ENCODE measurements at regions of chr18 and their contacts with region 1.

Region 1: DNA sequence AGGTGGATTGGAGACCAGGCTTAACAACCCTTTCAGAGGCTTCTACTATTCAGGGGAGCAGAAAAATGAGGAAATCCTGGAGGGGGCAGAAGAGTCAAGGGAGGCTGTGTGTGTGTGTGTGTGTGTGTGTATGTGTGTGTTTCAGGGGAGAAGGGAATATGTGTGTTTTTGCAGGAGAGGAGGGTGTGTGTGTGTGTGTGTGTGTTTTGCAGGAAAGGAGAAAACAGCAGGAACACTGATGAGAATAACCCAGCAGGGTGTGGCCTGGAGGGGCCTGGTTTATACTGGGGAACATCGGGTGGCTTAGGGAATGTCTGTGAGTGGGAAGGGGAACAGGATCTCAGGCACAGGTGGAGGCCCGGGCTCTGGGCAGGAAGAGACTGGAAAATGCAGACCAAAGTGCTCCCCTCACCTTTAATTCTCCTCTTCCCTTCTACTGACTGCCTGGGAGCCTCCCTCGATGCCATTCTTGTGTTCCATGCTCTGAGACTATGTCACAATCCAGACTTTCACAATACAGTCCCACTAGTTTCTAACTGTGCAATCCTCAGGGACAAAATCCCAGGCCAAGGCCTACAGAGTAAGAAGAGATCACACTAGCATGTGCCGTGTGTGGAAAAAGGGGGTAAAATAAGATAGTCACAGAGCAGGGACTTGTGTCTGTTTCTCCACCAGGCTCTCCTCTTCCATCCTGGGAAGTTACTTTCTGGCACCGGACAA is 10.0 kb downstream of the CYB5A start:
- DNase-seq: peak; percentile 76
- H3K4me3 ChIP-seq: no peak overlapping the region
- H3K27ac ChIP-seq: peak overlapping the region; percentile 65 to 88 (median 84)
- H3K4me1 ChIP-seq: peaks cover 0 to 85% (median 76%) of the 10 kb centered on the region in 4 donors
- H3K27me3 ChIP-seq: no peaks in the 10 kb centered on the region
- CTCF ChIP-seq: no peak
- EP300 ChIP-seq: no peak
- POLR2A ChIP-seq: no peak

Region 2: GRCh38 chr18:74234326-74235171 is 47.2 kb before region 1 on chr18:
- intact Hi-C with region 1: loop called (anchors 1 kb)
- DNase-seq: peak; percentile 87
- H3K4me3 ChIP-seq: peak overlapping the region in 1 of 4 donors; percentile 3
- H3K27ac ChIP-seq: peak overlapping the region; percentile 57 to 87 (median 79)
- H3K4me1 ChIP-seq: peaks cover 0 to 35% (median 25%) of the 10 kb centered on the region in 4 donors
- H3K27me3 ChIP-seq: no peaks in the 10 kb centered on the region
- CTCF ChIP-seq: no peak
- EP300 ChIP-seq: peak; percentile 57 to 91 (median 86)
- POLR2A ChIP-seq: no peak

Region 3: DNA sequence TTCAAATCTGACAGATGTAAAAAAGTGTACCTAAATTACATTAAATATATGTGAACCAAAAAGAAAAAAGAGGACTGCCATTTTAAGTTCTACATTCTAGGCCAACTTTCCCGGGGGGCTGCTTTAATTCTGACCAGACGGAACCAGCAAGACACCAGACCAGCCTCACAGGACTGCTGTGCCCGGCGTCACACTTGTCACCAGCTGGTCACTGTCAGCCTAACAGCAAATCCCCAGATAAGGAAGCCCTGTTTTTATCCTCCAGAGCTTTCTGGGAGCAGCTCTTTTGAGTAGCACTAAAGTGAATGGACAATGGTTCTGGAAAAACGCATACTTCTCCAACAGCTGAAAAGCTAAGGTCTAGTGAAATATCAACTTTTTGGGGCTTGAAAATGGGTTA is 25.6 kb before region 1 on chr18:
- intact Hi-C with region 1: loop called (anchors 2 kb)
- DNase-seq: no peak
- H3K4me3 ChIP-seq: no peak overlapping the region
- H3K27ac ChIP-seq: peak overlapping the region in 2 of 4 donors; percentile 67 to 72
- H3K4me1 ChIP-seq: peaks cover 0 to 60% (median 34%) of the 10 kb centered on the region in 4 donors
- H3K27me3 ChIP-seq: no peaks in the 10 kb centered on the region
- CTCF ChIP-seq: no peak
- EP300 ChIP-seq: no peak
- POLR2A ChIP-seq: no peak

Measured in sigmoid colon (tissue), 7 donors.